Activated naive CD4-positive, alpha-beta T cell treated with anti-CD3 and anti-CD28 coated beads for 36 hours (primary cell): ENCODE measurements at regions of chr6 and their contacts with region 1.

Region 1: GRCh38 chr6:97361286-97361685 is 78.3 kb upstream of the MMS22L start:
- DNase-seq: no peak
- H3K4me3 Mint-ChIP-seq: no peak overlapping the region
- H3K27ac Mint-ChIP-seq: no peak overlapping the region
- H3K4me1 Mint-ChIP-seq: no peaks in the 10 kb centered on the region
- H3K27me3 Mint-ChIP-seq: peaks cover 5% of the 10 kb centered on the region

Region 2: GRCh38 chr6:96162711-96163120 is 1198.6 kb before region 1 on chr6:
- CTCF ChIA-PET with region 1: no interaction called
- intact Hi-C with region 1: loop called (anchors 5 kb)
- DNase-seq: no peak
- H3K4me3 Mint-ChIP-seq: no peak overlapping the region
- H3K27ac Mint-ChIP-seq: no peak overlapping the region
- H3K4me1 Mint-ChIP-seq: no peaks in the 10 kb centered on the region
- H3K27me3 Mint-ChIP-seq: no peaks in the 10 kb centered on the region

Region 3: DNA sequence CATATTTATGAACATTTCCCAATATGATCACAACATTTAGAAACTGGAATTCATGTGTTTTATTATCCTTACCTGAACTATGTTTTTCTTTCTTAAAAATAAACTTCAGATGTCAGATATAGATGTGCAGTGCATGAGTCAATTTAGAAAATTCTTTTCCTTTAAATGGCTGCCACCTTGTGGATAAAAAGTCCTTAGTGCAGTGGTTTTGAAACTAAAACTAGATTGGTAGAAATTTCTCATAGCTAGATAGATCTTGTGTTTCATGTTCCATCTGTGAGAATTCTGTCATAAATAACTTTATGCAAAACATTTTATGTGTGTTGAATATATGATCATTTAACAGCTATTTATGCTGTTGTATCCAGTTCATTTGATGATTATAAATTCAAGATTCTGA is 301.8 kb before region 1 on chr6:
- CTCF ChIA-PET with region 1: no interaction called
- intact Hi-C with region 1: no loop called
- DNase-seq: no peak
- H3K4me3 Mint-ChIP-seq: no peak overlapping the region
- H3K27ac Mint-ChIP-seq: no peak overlapping the region
- H3K4me1 Mint-ChIP-seq: peaks cover 2% of the 10 kb centered on the region
- H3K27me3 Mint-ChIP-seq: no peaks in the 10 kb centered on the region

Region 4: DNA sequence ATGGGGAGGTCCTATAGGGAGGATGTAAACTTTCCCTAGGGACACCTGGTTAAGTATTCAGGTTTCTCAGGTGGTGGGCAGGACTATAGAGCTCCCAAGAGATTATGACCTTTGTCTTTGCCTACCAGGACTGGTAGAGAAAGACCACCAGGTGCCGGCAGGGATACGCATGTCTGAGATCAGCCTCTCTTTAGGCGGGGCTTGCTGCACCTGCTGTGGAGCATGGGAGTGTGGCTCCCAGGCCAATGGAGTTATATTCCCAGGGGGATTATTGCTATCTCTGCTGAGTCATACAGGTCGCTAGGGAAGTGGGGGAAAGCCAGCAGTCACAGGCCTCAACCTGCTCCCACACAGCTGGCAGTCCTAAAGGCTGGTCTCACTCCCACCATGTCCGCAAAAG is 202.2 kb after region 1 on chr6:
- CTCF ChIA-PET with region 1: no interaction called
- intact Hi-C with region 1: no loop called
- DNase-seq: no peak
- H3K4me3 Mint-ChIP-seq: no peak overlapping the region
- H3K27ac Mint-ChIP-seq: no peak overlapping the region
- H3K4me1 Mint-ChIP-seq: no peaks in the 10 kb centered on the region
- H3K27me3 Mint-ChIP-seq: no peaks in the 10 kb centered on the region